ENCODE measurements at regions of chr1 and their contacts with region 1.

Region 1: DNA sequence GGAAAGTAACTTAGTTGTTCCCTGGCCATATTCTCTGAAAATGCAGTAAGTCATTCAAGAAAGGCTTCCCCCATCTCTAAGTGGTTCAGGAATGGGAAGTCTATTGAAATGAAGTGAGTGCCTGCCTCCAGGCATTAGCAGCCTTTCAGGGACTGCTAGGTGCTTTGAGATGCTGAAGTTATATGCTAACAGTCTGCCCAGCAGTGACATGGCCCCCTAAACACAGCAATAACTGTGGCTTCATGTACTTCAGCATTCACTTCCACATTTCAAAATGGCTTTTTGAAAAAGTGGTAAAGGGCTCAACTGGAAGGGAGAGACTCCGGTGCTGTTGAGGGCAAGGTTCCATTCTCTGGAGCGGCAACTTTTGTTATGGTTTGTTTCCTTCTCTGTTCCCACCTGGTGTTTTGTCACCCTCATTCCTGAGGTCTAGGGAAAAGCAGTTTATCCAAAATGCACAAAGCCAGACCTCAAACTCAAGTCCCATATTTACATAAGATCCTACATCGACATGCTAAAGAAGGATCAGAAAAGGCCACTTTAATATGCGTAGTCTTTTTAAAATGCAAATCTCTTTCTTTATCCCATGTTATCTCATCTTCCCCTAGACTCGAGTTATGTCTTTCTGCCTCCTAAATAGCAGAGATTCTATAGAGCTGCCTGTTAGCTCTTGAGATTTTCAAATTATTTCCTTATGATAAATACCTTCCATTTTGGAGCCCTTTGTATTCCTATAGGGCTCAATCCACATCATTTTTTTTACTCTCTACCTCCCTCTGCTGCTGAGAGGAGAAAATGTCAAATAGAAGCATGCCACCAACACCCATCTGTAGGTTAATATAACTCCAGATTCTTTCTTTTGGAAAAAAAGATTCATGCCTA is 34.2 kb upstream of the LRRC8C start:
- DNase-seq: peak; percentile 69
- H3K4me3 Mint-ChIP-seq: no peak overlapping the region
- H3K27ac Mint-ChIP-seq: peak overlapping the region; percentile 76
- H3K4me1 Mint-ChIP-seq: peaks cover 70% of the 10 kb centered on the region
- H3K27me3 Mint-ChIP-seq: no peaks in the 10 kb centered on the region

Region 2: GRCh38 chr1:89581859-89582258 is 16.8 kb before region 1 on chr1:
- intact Hi-C with region 1: loop called (anchors 2 kb)
- DNase-seq: no peak
- H3K4me3 Mint-ChIP-seq: no peak overlapping the region
- H3K27ac Mint-ChIP-seq: peak overlapping the region; percentile 86
- H3K4me1 Mint-ChIP-seq: peaks cover 40% of the 10 kb centered on the region
- H3K27me3 Mint-ChIP-seq: no peaks in the 10 kb centered on the region

Measured in activated CD4-positive, alpha-beta T cell treated with anti-CD3 and anti-CD28 coated beads, Interleukin-2, amount 10 ng/mL, durations not matched to agents 24 days and 14 days (primary cell).